ENCODE measurements at regions of chr5 and their contacts with region 1.

Region 1: GRCh38 chr5:73540192-73540591 is 25.2 kb downstream of the ANKRA2 start:
- DNase-seq: peak; percentile 35
- H3K4me3 Mint-ChIP-seq: no peak overlapping the region
- H3K27ac Mint-ChIP-seq: peak overlapping the region; percentile 80
- H3K4me1 Mint-ChIP-seq: peaks cover 49% of the 10 kb centered on the region
- H3K27me3 Mint-ChIP-seq: no peaks in the 10 kb centered on the region
- CTCF ChIP-seq: no peak

Region 2: GRCh38 chr5:73433982-73434342 is 106.2 kb before region 1 on chr5:
- CTCF ChIA-PET with region 1: no interaction called
- intact Hi-C with region 1: no loop called
- DNase-seq: no peak
- H3K4me3 Mint-ChIP-seq: no peak overlapping the region
- H3K27ac Mint-ChIP-seq: no peak overlapping the region
- H3K4me1 Mint-ChIP-seq: peaks cover 8% of the 10 kb centered on the region
- H3K27me3 Mint-ChIP-seq: peaks cover 42% of the 10 kb centered on the region
- CTCF ChIP-seq: no peak

Region 3: GRCh38 chr5:73498057-73499008 is 41.9 kb before region 1 on chr5 and contains the start of gene BTF3:
- CTCF ChIA-PET with region 1: interaction called, 7 read pairs
- intact Hi-C with region 1: loop called (anchors 2 kb)
- DNase-seq: peak; percentile 96
- H3K4me3 Mint-ChIP-seq: peak within 1 kb of the TSS; percentile 96
- H3K27ac Mint-ChIP-seq: peak within 1 kb of the TSS; percentile 98
- H3K4me1 Mint-ChIP-seq: peaks cover 13% of the 10 kb centered on the region
- H3K27me3 Mint-ChIP-seq: no peaks in the 10 kb centered on the region
- CTCF ChIP-seq: no peak
- total RNA-seq, gene BTF3: 794 and 872 TPM in 2 replicates

Region 4: GRCh38 chr5:73519531-73520283 is 20.5 kb before region 1 on chr5:
- CTCF ChIA-PET with region 1: interaction called, 6 read pairs
- intact Hi-C with region 1: loop called (anchors 1 kb)
- DNase-seq: peak; percentile 83
- H3K4me3 Mint-ChIP-seq: no peak overlapping the region
- H3K27ac Mint-ChIP-seq: peak overlapping the region; percentile 59
- H3K4me1 Mint-ChIP-seq: peaks cover 18% of the 10 kb centered on the region
- H3K27me3 Mint-ChIP-seq: no peaks in the 10 kb centered on the region
- CTCF ChIP-seq: peak; percentile 54

Region 5: DNA sequence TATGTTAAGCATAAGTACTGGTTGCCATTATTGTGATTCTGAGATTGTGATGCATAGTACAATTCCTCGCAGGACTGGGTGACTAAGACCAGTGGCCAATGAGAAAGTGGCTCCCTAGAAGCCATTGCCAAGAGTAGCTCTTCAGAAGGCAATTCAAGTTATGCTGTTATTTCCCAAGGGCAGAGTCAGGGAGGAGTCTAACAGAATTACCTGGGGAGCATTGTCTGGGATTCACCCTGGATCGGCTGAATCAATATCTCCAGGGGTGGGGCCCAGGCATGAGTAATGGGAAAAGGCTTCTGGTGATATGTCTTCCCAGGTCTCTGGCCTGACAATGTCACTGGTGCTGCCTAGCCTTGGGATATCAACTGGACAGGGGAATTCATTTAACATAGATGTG is 74.9 kb after region 1 on chr5:
- CTCF ChIA-PET with region 1: no interaction called
- intact Hi-C with region 1: no loop called
- DNase-seq: no peak
- H3K4me3 Mint-ChIP-seq: no peak overlapping the region
- H3K27ac Mint-ChIP-seq: no peak overlapping the region
- H3K4me1 Mint-ChIP-seq: peaks cover 44% of the 10 kb centered on the region
- H3K27me3 Mint-ChIP-seq: no peaks in the 10 kb centered on the region
- CTCF ChIP-seq: no peak

Region 6: GRCh38 chr5:73673161-73673591 is 133.0 kb after region 1 on chr5:
- CTCF ChIA-PET with region 1: no interaction called
- intact Hi-C with region 1: no loop called
- DNase-seq: no peak
- H3K4me3 Mint-ChIP-seq: no peak overlapping the region
- H3K27ac Mint-ChIP-seq: peak overlapping the region; percentile 43
- H3K4me1 Mint-ChIP-seq: peaks cover 67% of the 10 kb centered on the region
- H3K27me3 Mint-ChIP-seq: no peaks in the 10 kb centered on the region
- CTCF ChIP-seq: no peak

Region 7: DNA sequence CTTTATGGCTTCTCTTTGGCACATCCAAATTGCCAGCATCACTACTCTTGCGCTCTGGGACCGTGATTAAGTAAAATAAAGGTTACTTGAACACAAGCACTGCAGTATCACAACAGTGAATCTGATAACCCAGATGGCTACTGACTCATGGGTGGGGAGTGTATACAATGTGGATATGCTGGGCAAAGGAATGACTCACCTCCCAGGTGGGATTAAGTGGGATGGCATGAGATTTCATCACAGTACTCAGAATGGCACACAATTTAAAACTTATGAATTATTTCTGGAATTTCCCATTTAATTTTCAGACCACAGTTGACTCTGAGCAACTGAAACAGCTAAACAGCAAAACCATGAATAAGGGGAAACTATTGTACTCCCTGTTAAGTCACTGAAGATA is 1222.4 kb after region 1 on chr5:
- CTCF ChIA-PET with region 1: no interaction called
- intact Hi-C with region 1: no loop called
- DNase-seq: peak; percentile 54
- H3K4me3 Mint-ChIP-seq: no peak overlapping the region
- H3K27ac Mint-ChIP-seq: peak overlapping the region; percentile 68
- H3K4me1 Mint-ChIP-seq: peaks cover 37% of the 10 kb centered on the region
- H3K27me3 Mint-ChIP-seq: no peaks in the 10 kb centered on the region
- CTCF ChIP-seq: no peak

Measured in Calu3 (cell line).